ENCODE measurements at regions of chr6 and their contacts with region 1.

Region 1: DNA sequence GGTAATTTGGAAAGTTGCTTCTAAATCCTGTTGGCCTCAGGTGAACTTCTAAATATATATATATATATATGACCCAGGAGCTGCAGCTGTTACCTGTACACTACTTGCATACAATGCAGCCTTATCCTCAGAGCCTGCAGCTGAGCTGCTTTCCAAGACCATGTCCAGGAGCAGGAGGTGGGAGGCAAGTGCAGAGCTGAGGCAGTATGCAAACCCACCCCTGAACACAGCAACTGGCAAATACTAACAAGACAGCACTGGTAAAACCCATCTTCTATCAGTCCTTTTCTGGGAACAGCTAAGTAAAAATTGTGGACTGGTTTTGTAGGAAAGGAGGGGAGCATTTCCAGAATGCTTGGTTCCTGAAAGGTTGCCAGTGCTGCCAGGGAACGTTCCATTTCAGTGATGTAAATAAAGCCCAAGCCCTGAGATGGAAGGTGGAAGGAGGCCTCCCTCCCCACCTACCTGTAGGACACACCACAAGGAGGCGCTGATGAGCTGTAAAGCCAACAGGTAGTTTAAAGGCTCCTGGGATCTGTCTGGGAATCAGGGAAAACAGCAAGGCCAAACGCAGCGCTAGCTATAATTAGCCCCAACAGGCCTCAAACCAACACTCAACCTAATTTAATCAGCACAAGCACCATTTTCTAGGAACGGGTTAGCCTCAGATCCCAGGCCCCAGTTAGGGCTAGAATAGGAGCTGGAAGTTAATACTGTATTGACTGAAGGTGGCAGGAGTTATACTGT is 93.8 kb upstream of the MAP7 start:
- DNase-seq: peak; percentile 85

Region 2: GRCh38 chr6:136654086-136654485 is 10.1 kb after region 1 on chr6:
- CTCF ChIA-PET with region 1: interaction called, 22 read pairs
- POLR2A ChIA-PET with region 1: no interaction called
- DNase-seq: peak; percentile 17

Region 3: DNA sequence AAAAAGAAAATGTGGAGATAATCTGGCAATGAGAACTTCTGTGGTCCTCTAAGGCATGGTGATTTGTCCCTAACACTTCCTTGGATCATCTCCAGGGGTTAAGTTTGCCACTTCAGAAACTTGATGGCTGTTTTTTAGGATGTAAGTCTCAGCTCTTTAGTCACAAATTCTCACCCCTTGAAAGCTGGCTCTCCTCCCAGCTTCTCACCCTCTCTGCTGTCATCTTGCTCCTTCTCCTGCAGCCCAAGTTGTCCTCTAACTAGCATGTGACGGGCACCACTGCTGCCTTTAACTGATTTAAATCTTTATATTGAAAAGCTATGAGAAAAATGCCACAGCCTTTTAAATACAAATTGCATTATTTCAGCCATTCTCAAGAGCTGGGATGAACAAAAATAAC is 40.4 kb after region 1 on chr6:
- CTCF ChIA-PET with region 1: no interaction called
- POLR2A ChIA-PET with region 1: no interaction called
- DNase-seq: no peak

Region 4: DNA sequence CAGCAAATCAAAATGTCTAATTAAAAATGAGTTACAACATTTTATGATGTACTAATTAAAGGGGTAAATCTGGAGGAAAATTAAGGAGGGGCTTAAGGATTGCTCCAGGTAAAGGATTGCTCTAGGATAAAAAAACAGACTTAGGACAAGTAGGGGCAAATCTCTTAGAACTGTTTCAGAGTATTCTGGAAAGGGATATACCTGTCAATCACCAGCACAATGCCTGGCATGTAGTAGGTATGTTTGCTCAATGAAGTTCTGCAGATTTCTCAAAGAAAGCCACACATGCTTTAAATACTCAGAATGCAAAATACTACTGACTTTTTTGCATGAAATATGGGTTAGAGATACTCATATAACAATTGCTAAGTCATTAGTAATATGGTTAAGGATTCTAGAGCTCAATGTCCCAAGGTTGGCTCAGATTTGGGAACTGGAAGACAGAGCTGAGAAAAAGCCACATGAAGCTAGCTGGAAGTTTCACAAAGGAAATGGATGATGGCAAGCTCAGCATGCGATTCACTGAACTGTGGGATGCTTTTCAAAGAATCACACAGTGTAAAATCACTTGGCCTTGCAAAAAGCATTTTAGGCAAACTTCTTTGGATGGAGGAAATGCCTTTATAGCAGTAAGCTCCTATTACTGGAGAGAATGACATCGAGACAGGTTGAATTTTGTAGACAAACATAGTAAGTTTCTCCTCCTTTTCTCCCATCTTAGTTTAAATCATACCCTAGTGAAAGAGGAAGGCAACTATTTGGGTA is 75.4 kb after region 1 on chr6:
- CTCF ChIA-PET with region 1: no interaction called
- POLR2A ChIA-PET with region 1: no interaction called
- DNase-seq: no peak

Region 5: DNA sequence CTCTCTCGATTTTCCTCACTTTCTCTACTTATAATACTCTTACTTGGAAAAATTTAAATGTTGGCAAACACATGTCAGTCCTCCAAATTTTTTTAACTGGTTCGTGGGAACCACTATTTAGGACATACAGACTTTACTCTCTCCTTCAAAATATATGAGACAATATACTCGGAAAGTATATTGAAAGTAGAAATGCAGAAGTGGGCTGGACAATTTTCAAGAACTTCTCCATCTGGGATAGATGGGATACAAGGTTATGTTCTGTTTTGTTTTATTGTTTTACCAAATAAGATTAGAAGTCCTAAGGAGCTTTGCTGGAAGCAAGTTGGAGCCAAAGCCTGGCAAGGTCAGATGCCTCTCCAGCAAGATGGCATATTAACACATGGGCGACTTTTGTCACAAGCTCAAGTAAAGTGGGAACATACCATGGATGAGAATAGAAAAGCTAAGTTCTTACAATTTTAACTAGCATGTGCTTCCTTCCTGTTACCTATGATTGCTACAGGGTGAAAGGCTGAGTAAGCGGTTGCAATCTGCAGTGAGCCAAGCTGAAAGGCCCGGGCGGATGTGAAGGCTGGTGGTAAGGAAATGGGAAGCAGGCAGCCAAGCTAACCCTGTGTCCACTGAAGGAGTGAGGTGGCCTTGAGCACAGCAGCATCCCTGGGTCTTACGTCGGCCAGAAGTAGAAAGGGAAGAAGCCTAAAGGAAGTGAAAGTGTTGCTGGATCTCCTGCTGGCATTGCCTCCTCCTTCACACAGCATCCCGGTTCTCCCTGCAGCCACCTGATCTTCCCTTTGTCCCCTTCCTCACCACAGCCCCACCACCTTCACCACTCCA is 141.1 kb after region 1 on chr6:
- CTCF ChIA-PET with region 1: interaction called, 102 read pairs
- POLR2A ChIA-PET with region 1: interaction called, 41 read pairs
- DNase-seq: no peak

Measured in HEK293T (cell line).